GM13977 (cell line): ENCODE measurements at regions of chr10 and their contacts with region 1.

Region 1: GRCh38 chr10:124539935-124540641 is 78.5 kb downstream of the LHPP start:
- DNase-seq: peak; percentile 87
- CTCF ChIP-seq: peak; percentile 90

Region 2: GRCh38 chr10:124601431-124602120 is 61.5 kb after region 1 on chr10:
- in situ Hi-C with region 1: no loop called
- DNase-seq: no peak
- CTCF ChIP-seq: no peak

Region 3: GRCh38 chr10:124741281-124741921 is 201.3 kb after region 1 on chr10:
- in situ Hi-C with region 1: loop called (anchors 10 kb)
- DNase-seq: peak; percentile 84
- CTCF ChIP-seq: peak; percentile 88